ENCODE measurements at regions of chr17 and their contacts with region 1.

Region 1: DNA sequence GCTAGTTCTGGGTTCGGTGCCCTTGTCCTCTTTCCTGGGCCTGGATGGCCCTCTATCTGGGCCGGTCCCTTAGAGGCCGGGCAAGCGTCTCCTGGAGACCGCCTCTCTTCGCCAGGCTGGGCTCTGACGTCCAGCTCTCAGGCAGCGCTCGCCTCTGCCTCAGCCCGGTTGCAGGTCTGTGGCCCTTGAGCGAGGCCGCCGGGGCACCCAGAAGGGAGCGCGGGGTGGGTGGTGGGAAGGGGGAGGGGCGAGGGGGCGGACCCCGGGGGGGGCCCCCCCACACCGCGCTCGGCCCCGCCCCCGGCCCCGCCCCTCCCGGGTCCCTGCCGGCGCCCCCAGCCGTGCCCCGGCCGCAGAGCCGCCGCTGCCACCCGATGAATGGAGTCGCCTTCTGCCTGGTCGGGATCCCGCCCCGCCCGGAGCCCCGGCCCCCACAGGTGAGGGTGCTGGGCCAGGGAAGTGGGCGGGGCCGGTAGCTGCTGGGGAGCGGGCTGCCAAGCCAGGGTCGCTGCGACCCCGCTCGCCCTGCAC is at the start of gene ARHGAP23:
- DNase-seq: peak; percentile 57 to 85 (median 74)
- H3K4me3 ChIP-seq: peak within 1 kb of the TSS; percentile 59 to 97 (median 85)
- H3K27ac ChIP-seq: peak within 1 kb of the TSS; percentile 92 to 100 (median 98)
- H3K27me3 ChIP-seq: no peaks in the 10 kb centered on the region
- CTCF ChIP-seq: peak in 5 of 56 donors; percentile 8 to 28 (median 10)
- total RNA-seq, gene ARHGAP23: 93.2 to 496 (median 159) TPM

Region 2: DNA sequence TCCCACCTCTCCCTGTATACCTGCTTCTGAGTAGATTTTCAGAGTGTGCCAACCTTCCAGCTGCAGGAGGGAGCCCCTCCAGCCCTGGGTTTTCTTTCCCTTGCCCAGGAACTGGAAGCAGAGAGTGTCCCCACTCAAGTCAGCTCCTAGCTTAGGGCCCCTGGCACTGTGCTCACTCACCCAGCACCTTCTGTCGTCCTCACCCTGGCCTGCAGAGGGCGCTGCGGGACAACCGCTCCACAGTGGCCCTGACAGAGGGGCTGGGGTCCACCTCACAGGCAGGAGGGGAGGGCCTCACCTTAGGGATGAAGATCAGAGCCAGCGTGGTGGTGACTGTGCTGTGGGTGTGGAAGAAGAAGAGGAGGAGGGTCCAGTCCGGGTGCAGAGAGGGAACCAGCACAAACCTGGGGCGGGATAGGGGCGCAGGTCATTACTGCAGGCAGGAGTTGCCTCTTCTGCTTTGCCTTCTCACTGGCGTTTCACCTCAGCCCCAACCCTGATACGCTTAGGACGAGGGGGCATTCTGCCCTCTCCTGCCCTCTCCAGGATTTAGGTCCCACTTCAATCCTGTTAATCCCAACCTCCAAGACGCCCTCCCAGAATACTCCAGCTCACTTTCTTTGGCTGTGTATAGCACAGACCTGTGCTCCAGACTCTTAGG is 94.4 kb before region 1 on chr17:
- intact Hi-C with region 1: no loop called
- DNase-seq: peak in 2 of 10 donors; percentile 47 to 54
- H3K4me3 ChIP-seq: no peak overlapping the region
- H3K27ac ChIP-seq: no peak overlapping the region
- H3K27me3 ChIP-seq: no peaks in the 10 kb centered on the region
- CTCF ChIP-seq: peak in 52 of 56 donors; percentile 22 to 71 (median 55)

Region 3: GRCh38 chr17:38379438-38379837 is 48.7 kb before region 1 on chr17:
- intact Hi-C with region 1: no loop called
- DNase-seq: no peak
- H3K4me3 ChIP-seq: no peak overlapping the region
- H3K27ac ChIP-seq: no peak overlapping the region
- H3K27me3 ChIP-seq: no peaks in the 10 kb centered on the region
- CTCF ChIP-seq: no peak

Region 4: GRCh38 chr17:38454516-38454915 is 26.3 kb after region 1 on chr17:
- intact Hi-C with region 1: loop called in 1 of 2 experiments (anchors 1 kb)
- DNase-seq: peak; percentile 69 to 98 (median 96)
- H3K4me3 ChIP-seq: peak overlapping the region; percentile 5 to 65 (median 43)
- H3K27ac ChIP-seq: peak overlapping the region in 58 of 59 donors; percentile 27 to 98 (median 94)
- H3K27me3 ChIP-seq: peaks cover 0 to 2% (median 0%) of the 10 kb centered on the region in 45 donors
- CTCF ChIP-seq: peak in 9 of 56 donors; percentile 9 to 43 (median 24)

Region 5: DNA sequence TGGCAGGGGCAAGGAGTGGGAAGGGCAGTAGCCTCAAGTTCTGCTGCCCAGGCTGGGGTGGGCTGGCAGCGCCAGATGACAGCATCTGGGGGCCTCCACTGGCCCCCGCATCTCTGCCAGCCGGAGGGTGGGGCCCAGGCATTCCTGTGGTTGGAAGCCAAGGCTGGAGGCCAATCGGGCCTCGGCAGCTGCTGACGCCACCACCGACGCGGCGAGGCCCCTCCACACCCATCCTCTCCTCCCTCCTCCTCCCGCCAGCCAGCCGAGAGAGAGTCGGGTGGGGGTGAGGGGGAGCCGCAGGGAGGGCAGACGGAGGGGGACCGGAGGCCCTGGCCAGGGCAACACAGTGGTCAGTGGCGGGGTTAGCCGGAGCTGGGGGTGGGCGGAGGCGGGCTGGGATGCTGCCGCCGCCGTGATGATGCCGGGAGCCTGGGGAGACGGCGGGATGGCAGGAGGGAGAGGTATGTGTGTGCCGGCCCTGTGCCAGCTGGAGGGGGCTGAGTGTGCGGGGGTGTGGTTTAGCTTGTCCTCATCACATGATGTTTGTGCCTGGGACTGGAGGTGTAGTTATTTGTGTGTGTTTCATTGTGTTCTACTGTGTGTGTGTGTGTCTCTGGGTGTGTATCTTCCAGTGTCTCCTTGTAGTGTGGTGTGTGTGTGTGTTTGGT is 36.7 kb after region 1 on chr17:
- intact Hi-C with region 1: loop called in 1 of 2 experiments (anchors 5 kb)
- DNase-seq: peak; percentile 82 to 93 (median 92)
- H3K4me3 ChIP-seq: peak overlapping the region; percentile 25 to 67 (median 53)
- H3K27ac ChIP-seq: peak overlapping the region; percentile 62 to 98 (median 93)
- H3K27me3 ChIP-seq: no peaks in the 10 kb centered on the region
- CTCF ChIP-seq: peak in 1 of 56 donors; percentile 15

Region 6: GRCh38 chr17:38485146-38485468 is 56.9 kb after region 1 on chr17:
- intact Hi-C with region 1: loop called (anchors 5 kb)
- DNase-seq: no peak
- H3K4me3 ChIP-seq: peak overlapping the region in 2 of 59 donors; percentile 3 to 8
- H3K27ac ChIP-seq: peak overlapping the region; percentile 4 to 92 (median 85)
- H3K27me3 ChIP-seq: no peaks in the 10 kb centered on the region
- CTCF ChIP-seq: peak in 18 of 56 donors; percentile 0 to 39 (median 7)

Region 7: GRCh38 chr17:38564869-38565268 is 136.7 kb after region 1 on chr17:
- intact Hi-C with region 1: loop called in 1 of 2 experiments (anchors 5 kb)
- DNase-seq: peak in 2 of 10 donors; percentile 48 to 69
- H3K4me3 ChIP-seq: peak overlapping the region in 6 of 59 donors; percentile 4 to 34 (median 17)
- H3K27ac ChIP-seq: peak overlapping the region in 58 of 59 donors; percentile 48 to 99 (median 97)
- H3K27me3 ChIP-seq: peaks cover 0 to 13% (median 0%) of the 10 kb centered on the region in 45 donors
- CTCF ChIP-seq: no peak

Measured in dorsolateral prefrontal cortex (tissue), 120 donors.